ENCODE measurements at regions of chr4 and their contacts with region 1.

Region 1: GRCh38 chr4:34861661-34862060 is 1382.7 kb downstream of the ARAP2 start:
- DNase-seq: no peak
- H3K4me3 ChIP-seq: no peak overlapping the region
- H3K27ac ChIP-seq: no peak overlapping the region
- H3K4me1 ChIP-seq: no peaks in the 10 kb centered on the region
- H3K27me3 ChIP-seq: no peaks in the 10 kb centered on the region
- CTCF ChIP-seq: no peak

Region 2: DNA sequence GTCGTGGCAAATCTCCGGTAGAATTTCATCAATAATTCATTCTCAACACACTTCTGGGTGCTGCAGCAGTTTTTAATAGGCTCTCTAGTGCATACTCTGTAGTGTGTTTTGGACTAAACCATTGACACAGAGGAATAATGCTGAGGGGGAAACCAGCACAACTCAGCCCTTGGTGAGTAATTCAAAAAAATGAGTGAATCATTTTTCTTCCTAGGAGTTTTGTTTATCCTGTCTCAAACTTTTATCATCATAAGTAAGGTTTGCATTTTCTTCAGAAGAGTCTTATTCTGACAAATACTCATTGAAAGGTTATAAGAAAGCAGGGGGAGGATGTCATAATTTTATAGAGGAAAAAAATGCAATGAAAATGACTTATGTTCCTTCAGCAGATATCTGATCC is 1598.8 kb before region 1 on chr4:
- CTCF ChIA-PET with region 1: no interaction called
- POLR2A ChIA-PET with region 1: interaction called, 10 read pairs
- intact Hi-C with region 1: no loop called
- DNase-seq: no peak
- H3K4me3 ChIP-seq: no peak overlapping the region
- H3K27ac ChIP-seq: no peak overlapping the region
- H3K4me1 ChIP-seq: no peaks in the 10 kb centered on the region
- H3K27me3 ChIP-seq: no peaks in the 10 kb centered on the region
- CTCF ChIP-seq: no peak